SK-N-SH (cell line): ENCODE measurements at regions of chr20 and their contacts with region 1.

Region 1: DNA sequence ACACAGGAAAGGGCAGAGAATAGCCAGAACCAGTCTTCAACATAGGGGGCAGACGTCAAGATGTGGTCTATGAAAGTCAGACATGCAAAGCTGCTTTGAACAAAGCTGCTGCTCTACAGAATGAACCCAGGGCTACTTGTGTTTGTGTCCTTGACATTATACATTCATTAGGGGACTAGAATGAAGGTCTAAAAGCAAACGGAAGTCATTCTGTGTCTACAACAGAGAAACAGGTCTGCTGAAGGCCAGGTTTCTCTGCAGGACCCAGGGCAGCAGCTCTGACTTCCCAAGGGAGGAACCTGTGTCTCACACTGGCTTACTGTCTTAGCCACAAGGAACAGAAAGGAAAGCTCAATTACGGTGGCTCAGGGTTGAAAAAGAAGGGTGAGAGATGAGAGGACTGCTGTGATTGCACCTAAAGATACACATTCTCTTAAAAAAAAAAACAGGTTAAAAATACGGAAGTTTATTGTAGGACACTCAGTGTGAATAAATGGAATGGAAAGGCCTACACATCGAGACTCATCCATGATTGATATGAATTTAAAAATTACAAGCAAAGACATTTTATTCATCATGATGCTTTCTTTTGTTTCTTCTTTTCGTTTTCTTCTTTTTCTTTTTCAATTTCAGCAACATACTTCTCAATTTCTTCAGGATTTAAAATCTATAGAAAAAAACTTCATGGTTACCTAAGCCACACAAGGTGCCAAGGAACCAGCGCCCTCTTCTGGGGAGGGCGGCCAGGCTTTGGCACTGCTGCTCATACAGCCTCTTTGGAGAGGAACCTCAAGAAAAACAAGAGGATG is 6.7 kb downstream of the PSMA7 start:
- DNase-seq: peak; percentile 78
- H3K4me3 ChIP-seq: no peak overlapping the region; a peak in 1 of 4 replicates
- H3K27ac ChIP-seq: peak overlapping the region in 1 of 2 experiments; percentile 3; a peak in 1 of 4 replicates
- H3K4me1 ChIP-seq: peaks cover 5 to 9% of the 10 kb centered on the region in 2 experiments; a peak in 3 of 4 replicates
- H3K27me3 ChIP-seq: no peaks in the 10 kb centered on the region
- CTCF ChIP-seq: peak; percentile 96
- EP300 ChIP-seq: no peak
- RAD21 ChIP-seq: peak; percentile 73

Region 2: GRCh38 chr20:62025832-62026563 is 110.5 kb before region 1 on chr20:
- CTCF ChIA-PET with region 1: interaction called, 16 read pairs
- POLR2A ChIA-PET with region 1: interaction called, 3 read pairs
- DNase-seq: peak; percentile 58
- H3K4me3 ChIP-seq: no peak overlapping the region
- H3K27ac ChIP-seq: peak overlapping the region in 1 of 2 experiments; percentile 29; a peak in 2 of 4 replicates
- H3K4me1 ChIP-seq: peaks cover 0 to 59% of the 10 kb centered on the region in 2 experiments; a peak in 1 of 4 replicates
- H3K27me3 ChIP-seq: no peaks in the 10 kb centered on the region
- CTCF ChIP-seq: no peak
- EP300 ChIP-seq: no peak
- RAD21 ChIP-seq: peak; percentile 41

Region 3: DNA sequence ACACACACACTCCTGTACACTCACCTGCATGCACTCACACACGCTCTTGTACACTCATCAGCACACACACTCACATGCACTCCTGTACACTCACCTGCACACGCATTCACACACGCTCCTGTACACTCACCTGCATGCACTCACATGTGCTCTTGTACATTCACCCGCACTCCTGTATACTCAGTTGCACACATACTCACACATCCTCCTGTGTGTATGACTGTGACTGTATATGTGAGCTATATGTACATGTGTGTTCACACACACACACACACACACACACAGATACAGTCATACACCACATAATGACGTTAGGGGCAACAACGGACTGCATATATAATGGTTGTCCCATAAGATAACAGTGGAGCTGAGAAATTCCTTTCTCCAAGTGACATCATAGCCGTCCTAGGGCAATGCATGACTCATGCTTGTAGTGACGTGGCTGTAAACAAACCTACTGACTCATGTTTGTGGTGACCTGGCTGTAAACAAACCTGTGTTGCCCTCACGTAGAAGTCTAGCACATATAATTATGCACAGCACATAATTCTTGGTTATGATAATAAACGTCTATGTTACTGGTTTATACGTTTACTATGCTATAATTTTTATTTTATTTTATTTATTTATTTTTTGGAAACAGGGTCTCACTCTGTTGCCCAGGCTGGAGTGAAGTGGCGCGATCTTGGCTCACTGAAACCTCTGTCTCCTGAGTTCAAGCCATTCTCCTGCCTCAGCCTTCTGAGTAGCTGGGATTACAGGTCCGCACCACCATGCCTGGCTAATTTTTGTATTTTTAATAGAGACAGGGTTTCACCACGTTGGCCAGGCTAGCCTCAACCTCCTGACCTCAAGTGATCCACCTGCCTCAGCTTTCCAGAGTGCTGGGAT is 48.0 kb before region 1 on chr20:
- CTCF ChIA-PET with region 1: no interaction called
- POLR2A ChIA-PET with region 1: no interaction called
- DNase-seq: no peak
- H3K4me3 ChIP-seq: no peak overlapping the region
- H3K27ac ChIP-seq: no peak overlapping the region
- H3K4me1 ChIP-seq: no peaks in the 10 kb centered on the region
- H3K27me3 ChIP-seq: no peaks in the 10 kb centered on the region; the same call in 1 of the 2 replicates
- CTCF ChIP-seq: no peak
- EP300 ChIP-seq: no peak
- RAD21 ChIP-seq: no peak

Region 4: GRCh38 chr20:62121776-62122631 is 14.5 kb before region 1 on chr20 and contains the start of gene LSM14B:
- CTCF ChIA-PET with region 1: interaction called, 18 read pairs
- POLR2A ChIA-PET with region 1: interaction called, 5 read pairs
- DNase-seq: peak; percentile 99
- H3K4me3 ChIP-seq: peak within 1 kb of the TSS; percentile 78 to 82
- H3K27ac ChIP-seq: peak within 1 kb of the TSS; percentile 85 to 87
- H3K4me1 ChIP-seq: peaks cover 9 to 28% of the 10 kb centered on the region in 2 experiments; a peak in 3 of 4 replicates
- H3K27me3 ChIP-seq: no peaks in the 10 kb centered on the region
- CTCF ChIP-seq: no peak
- EP300 ChIP-seq: no peak
- RAD21 ChIP-seq: no peak
- polyA plus RNA-seq, gene LSM14B: 52.2 and 64.6 TPM in 2 replicates

Region 5: GRCh38 chr20:62156592-62157386 is 20.3 kb after region 1 on chr20:
- CTCF ChIA-PET with region 1: interaction called, 15 read pairs
- POLR2A ChIA-PET with region 1: interaction called, 3 read pairs
- DNase-seq: peak; percentile 96
- H3K4me3 ChIP-seq: no peak overlapping the region
- H3K27ac ChIP-seq: peak overlapping the region in 1 of 2 experiments; percentile 9; a peak in 1 of 4 replicates
- H3K4me1 ChIP-seq: peaks cover 0 to 5% of the 10 kb centered on the region in 2 experiments; a peak in 1 of 4 replicates
- H3K27me3 ChIP-seq: no peaks in the 10 kb centered on the region
- CTCF ChIP-seq: peak; percentile 71
- EP300 ChIP-seq: no peak
- RAD21 ChIP-seq: peak; percentile 63

Region 6: GRCh38 chr20:62183426-62184142 is 47.1 kb after region 1 on chr20:
- CTCF ChIA-PET with region 1: no interaction called
- POLR2A ChIA-PET with region 1: no interaction called
- DNase-seq: peak; percentile 59
- H3K4me3 ChIP-seq: peak overlapping the region; percentile 92 to 98
- H3K27ac ChIP-seq: peak overlapping the region; percentile 78 to 82
- H3K4me1 ChIP-seq: peaks cover 6 to 11% of the 10 kb centered on the region in 2 experiments; a peak in 1 of 4 replicates
- H3K27me3 ChIP-seq: no peaks in the 10 kb centered on the region
- CTCF ChIP-seq: no peak
- EP300 ChIP-seq: no peak
- RAD21 ChIP-seq: no peak